AG04449 (cell line): ENCODE measurements at regions of chr7 and their contacts with region 1.

Region 1: GRCh38 chr7:151448261-151449252 is 8.6 kb upstream of the CRYGN start:
- DNase-seq: no peak
- H3K4me3 ChIP-seq: peak overlapping the region; percentile 54
- CTCF ChIP-seq: peak; percentile 82

Region 2: GRCh38 chr7:151327659-151328058 is 120.9 kb before region 1 on chr7:
- CTCF ChIA-PET with region 1: interaction called, 10 read pairs
- POLR2A ChIA-PET with region 1: no interaction called
- DNase-seq: no peak
- H3K4me3 ChIP-seq: no peak overlapping the region
- CTCF ChIP-seq: no peak

Region 3: DNA sequence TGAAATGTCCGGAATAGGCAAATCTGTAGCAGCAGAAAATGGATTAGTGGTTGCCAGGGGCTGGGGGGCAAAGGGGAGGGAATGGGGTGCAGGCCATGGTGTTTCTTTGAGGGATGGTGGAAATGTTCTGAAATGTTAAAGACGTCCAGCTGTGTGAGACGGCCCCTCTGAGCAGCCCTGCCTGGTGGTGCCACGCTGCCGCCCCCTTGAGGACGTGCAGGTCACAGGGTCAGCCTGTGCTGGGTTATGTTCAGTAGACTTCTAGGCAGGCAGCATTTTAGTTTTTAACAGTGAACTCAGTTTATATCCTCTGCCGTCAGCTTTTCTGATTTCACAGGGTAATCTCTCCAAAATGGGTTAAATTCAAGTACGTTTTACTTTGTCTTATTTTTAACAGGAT is 97.5 kb before region 1 on chr7:
- CTCF ChIA-PET with region 1: interaction called, 50 read pairs
- POLR2A ChIA-PET with region 1: no interaction called
- DNase-seq: no peak
- H3K4me3 ChIP-seq: no peak overlapping the region
- CTCF ChIP-seq: peak; percentile 1

Region 4: GRCh38 chr7:151368136-151368571 is 80.4 kb before region 1 on chr7:
- CTCF ChIA-PET with region 1: interaction called, 270 read pairs
- POLR2A ChIA-PET with region 1: interaction called, 4 read pairs
- DNase-seq: no peak
- H3K4me3 ChIP-seq: no peak overlapping the region
- CTCF ChIP-seq: peak; percentile 95

Region 5: DNA sequence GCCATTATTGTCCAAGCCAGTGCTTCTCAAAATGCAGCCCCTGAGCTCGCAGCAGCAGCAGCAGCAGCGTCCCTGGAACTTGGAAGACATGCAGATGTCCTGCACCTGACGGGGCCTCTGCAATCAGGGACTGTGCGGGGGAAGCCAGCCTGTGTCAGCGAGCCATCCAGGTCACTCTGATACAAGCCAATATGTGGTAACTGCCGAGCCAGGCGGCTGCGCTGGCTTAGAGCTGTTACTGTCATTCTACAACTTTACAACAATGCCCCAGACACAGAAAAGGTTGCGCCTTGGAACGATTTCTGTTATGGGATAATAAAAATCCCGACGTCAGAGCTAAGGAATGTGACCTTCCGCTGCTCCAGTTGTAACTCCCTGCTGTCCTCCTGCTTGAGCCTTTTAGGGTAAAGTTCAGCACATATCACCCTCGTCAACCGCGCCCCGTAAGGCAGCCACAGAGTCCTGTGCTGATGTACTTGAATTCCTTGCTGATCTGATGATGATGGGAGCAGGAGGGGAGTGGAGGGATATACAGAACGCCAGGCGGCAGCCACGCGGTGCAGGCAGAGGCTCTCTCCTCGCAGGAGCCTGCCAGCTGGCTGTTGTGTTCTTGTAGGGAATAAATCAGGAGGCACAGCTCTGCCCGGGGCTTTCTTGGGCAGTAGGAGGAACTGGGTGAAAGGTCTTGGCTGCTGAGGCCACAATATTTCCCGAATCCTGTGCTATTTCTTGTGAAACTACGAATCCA is 11.3 kb after region 1 on chr7:
- CTCF ChIA-PET with region 1: interaction called, 78 read pairs
- POLR2A ChIA-PET with region 1: no interaction called
- DNase-seq: peak; percentile 79
- H3K4me3 ChIP-seq: peak overlapping the region; percentile 44
- CTCF ChIP-seq: peak; percentile 58

Region 6: GRCh38 chr7:151626422-151627115 is 178.0 kb after region 1 on chr7:
- CTCF ChIA-PET with region 1: no interaction called
- POLR2A ChIA-PET with region 1: no interaction called
- DNase-seq: no peak
- H3K4me3 ChIP-seq: no peak overlapping the region
- CTCF ChIP-seq: peak; percentile 25